PC-3 (cell line): ENCODE measurements at regions of chr19 and their contacts with region 1.

Region 1: GRCh38 chr19:47035127-47036096 is 13.0 kb downstream of the TMEM160 start:
- DNase-seq: peak; percentile 86
- ATAC-seq: peak; percentile 90
- H3K4me3 ChIP-seq: peak overlapping the region; percentile 67
- H3K27ac ChIP-seq: peak overlapping the region; percentile 84
- H3K4me1 ChIP-seq: peaks cover 7% of the 10 kb centered on the region; the same call in 1 of the 2 replicates
- H3K27me3 ChIP-seq: no peaks in the 10 kb centered on the region
- CTCF ChIP-seq: peak; percentile 72

Region 2: DNA sequence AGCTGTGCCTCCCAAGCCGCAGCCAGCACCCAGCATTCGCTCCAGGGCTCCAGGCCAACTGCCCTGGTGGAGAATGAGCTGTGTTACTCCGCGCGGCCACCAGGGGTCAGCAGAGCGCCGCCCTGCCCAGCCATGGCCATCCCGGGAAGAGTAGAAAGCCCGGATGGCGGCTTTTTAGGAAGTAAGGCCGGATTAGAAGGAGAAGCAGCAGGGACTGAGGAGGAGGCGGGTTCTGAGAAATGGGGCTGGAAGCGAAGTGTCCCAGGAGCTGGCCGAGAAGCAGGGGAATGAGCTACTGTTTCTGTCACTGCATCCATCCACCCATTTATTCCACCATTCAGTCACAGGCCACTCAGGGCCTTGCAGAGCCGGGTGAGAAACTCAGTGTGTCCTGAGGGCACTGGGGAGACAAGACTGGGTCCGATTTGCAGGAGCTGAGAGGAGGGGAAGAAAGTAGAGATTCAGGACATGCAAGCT is 22.3 kb before region 1 on chr19:
- CTCF ChIA-PET with region 1: interaction called, 4 read pairs
- POLR2A ChIA-PET with region 1: no interaction called
- intact Hi-C with region 1: loop called (anchors 1 kb)
- DNase-seq: peak; percentile 79
- ATAC-seq: peak; percentile 90
- H3K4me3 ChIP-seq: peak overlapping the region; percentile 56
- H3K27ac ChIP-seq: no peak overlapping the region
- H3K4me1 ChIP-seq: peaks cover 4% of the 10 kb centered on the region
- H3K27me3 ChIP-seq: no peaks in the 10 kb centered on the region
- CTCF ChIP-seq: peak; percentile 92